ENCODE measurements at regions of chr14 and their contacts with region 1.

Region 1: DNA sequence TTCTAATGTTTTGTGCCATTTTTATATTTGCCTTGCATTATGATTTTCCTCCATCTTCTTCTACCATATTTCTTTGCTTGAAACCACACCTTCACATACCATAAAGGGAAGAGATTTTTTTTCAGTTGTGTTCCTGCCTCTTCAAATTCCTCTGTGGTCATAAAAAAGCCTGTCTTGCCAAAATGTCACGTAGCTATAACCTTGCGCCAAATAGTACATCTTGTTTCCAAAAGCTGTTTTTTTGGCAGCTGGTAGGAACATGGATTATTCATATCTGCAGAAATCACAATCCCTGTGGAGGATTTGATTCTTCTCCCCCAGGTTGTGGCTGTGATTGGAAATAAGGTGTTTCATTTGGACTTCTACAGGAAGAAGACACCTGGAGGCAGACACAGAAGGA is 133.6 kb upstream of the SLC35F4 start:
- DNase-seq: peak; percentile 50
- H3K4me3 ChIP-seq: peak overlapping the region; percentile 12
- H3K27ac ChIP-seq: peak overlapping the region; percentile 86
- H3K4me1 ChIP-seq: peaks cover 66% of the 10 kb centered on the region
- H3K27me3 ChIP-seq: no peaks in the 10 kb centered on the region
- CTCF ChIP-seq: no peak

Region 2: GRCh38 chr14:57040824-57041223 is 958.6 kb before region 1 on chr14:
- CTCF ChIA-PET with region 1: no interaction called
- POLR2A ChIA-PET with region 1: no interaction called
- intact Hi-C with region 1: loop called (anchors 5 kb)
- DNase-seq: no peak
- H3K4me3 ChIP-seq: no peak overlapping the region
- H3K27ac ChIP-seq: no peak overlapping the region
- H3K4me1 ChIP-seq: peaks cover 31% of the 10 kb centered on the region
- H3K27me3 ChIP-seq: no peaks in the 10 kb centered on the region
- CTCF ChIP-seq: no peak

Region 3: GRCh38 chr14:57884175-57884574 is 115.3 kb before region 1 on chr14:
- CTCF ChIA-PET with region 1: no interaction called
- POLR2A ChIA-PET with region 1: no interaction called
- intact Hi-C with region 1: loop called (anchors 1 kb)
- DNase-seq: peak; percentile 33
- H3K4me3 ChIP-seq: no peak overlapping the region
- H3K27ac ChIP-seq: no peak overlapping the region
- H3K4me1 ChIP-seq: peaks cover 31% of the 10 kb centered on the region
- H3K27me3 ChIP-seq: no peaks in the 10 kb centered on the region
- CTCF ChIP-seq: peak; percentile 58

Region 4: GRCh38 chr14:57943038-57943437 is 56.4 kb before region 1 on chr14:
- CTCF ChIA-PET with region 1: no interaction called
- POLR2A ChIA-PET with region 1: no interaction called
- intact Hi-C with region 1: loop called (anchors 5 kb)
- DNase-seq: peak; percentile 62
- H3K4me3 ChIP-seq: peak overlapping the region; percentile 4
- H3K27ac ChIP-seq: peak overlapping the region; percentile 78
- H3K4me1 ChIP-seq: peaks cover 32% of the 10 kb centered on the region
- H3K27me3 ChIP-seq: no peaks in the 10 kb centered on the region
- CTCF ChIP-seq: no peak